AG04449 (cell line): ENCODE measurements at regions of chr9 and their contacts with region 1.

Region 1: DNA sequence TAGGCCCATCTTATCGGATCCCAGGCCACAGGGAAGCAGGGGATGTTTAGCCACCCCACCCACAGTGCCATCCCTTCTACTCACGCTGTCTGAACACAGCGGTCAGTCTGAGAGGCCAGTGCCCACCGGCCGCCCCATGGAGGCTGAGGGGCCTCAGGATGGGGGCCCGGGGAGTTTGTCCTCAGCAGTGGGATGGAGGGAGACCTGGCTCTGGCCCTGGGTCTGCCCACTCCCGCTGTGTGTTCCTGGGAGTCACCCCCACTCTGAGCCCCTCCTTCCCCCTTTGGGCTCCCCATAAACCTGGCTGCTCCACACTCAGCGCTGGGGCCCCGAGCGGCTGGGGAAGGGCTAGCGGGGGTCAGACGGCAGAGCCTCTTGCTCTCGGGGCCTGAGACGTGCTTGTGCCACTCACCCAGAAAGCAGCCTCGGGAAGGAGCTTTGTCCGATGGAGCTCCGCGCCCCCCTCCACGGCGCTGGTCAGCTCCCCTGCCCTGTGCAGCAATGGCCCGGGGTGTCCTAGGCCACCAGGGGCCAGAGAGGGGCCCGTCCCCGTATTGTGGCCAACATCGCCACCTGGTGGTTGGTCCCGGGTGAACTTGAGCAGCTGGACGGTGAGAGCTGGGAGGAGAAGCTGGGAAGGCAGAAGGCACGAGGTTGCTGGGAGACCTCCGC is 10.9 kb upstream of the LAMC3 start:
- DNase-seq: no peak
- H3K4me3 ChIP-seq: no peak overlapping the region
- CTCF ChIP-seq: peak; percentile 83

Region 2: DNA sequence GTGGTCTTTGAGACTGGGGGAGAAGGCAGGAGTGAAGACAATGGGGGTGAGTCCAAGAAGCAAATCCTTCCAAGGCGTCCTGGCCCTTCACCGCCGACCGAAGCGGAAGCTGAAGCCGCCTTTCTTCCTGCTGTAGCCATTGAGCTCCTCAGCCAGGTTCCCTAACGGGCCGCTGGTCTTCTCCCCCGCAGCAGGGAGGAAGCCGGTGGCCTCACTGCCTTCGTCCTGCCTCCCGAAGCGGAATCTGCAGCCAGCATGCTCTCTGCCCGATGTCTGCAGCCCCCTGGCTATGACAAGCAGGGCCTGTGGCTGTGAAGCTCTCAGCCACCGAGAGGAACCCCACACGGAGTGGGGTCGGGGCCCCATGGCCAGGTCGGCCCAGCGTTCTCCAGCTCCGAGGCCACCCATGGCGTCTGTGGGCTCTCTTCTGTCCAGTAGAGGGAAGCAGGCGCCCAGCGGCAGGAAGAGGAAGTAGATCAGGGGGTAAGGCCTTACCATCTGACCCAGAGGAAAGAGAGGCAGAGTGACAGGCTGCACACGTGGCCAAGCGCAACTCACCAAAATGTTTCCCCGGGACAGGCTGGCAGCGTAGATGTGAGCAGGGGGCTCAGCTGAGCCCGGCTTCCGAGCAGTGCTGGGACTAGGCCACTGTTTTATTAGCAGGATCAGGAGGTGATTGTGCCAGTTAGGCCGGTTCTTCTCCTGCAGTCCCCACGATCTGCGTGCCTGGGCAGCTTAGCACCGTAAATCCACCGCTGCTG is 104.5 kb before region 1 on chr9:
- CTCF ChIA-PET with region 1: interaction called, 16 read pairs
- POLR2A ChIA-PET with region 1: no interaction called
- DNase-seq: no peak
- H3K4me3 ChIP-seq: no peak overlapping the region
- CTCF ChIP-seq: peak; percentile 24

Region 3: GRCh38 chr9:130905125-130905901 is 92.7 kb before region 1 on chr9:
- CTCF ChIA-PET with region 1: interaction called, 11 read pairs
- POLR2A ChIA-PET with region 1: no interaction called
- DNase-seq: no peak
- H3K4me3 ChIP-seq: no peak overlapping the region
- CTCF ChIP-seq: no peak

Region 4: DNA sequence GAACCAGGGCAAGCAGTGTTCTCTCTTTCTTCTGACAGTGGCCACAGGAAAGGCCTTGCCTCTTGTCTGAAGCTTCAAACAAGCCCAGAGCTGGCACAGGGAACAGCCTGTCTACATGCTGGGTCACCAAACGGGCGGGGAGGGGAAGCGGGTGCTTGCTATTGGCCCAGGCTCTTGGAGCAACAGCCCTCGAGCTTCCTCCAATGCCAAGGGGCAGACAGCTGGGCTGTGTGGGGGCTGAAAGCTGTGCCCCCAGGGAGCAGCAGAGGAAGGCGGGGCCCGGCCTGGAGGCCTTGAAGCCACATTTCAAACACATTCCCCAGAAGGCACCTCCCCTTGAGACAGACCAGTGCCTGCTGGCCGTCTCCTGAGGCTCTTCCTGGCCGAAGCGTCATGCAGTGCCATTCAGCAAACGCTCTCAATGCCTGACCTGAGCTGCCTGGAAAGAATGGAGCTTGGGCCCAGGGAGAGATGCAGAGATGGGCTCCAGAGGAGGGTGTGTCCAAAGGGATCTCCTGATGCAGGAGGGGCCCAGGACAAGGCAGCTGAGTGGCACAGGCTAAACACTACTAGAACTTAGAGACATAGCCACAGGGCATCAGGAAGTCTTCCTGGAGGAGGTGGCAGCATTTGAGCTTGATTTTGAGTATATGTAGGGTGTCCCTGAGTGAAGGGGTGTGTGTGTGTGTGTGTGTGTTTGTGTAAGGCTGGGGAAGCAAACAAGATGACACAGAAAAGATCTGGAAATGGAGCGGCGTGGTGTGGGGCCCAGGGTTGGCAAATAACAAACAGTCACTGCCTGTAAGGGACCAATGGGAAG is 61.6 kb before region 1 on chr9:
- CTCF ChIA-PET with region 1: interaction called, 11 read pairs
- POLR2A ChIA-PET with region 1: no interaction called
- DNase-seq: peak; percentile 34
- H3K4me3 ChIP-seq: no peak overlapping the region
- CTCF ChIP-seq: no peak

Region 5: GRCh38 chr9:130986356-130986965 is 11.6 kb before region 1 on chr9:
- CTCF ChIA-PET with region 1: interaction called, 48 read pairs
- POLR2A ChIA-PET with region 1: no interaction called
- DNase-seq: no peak
- H3K4me3 ChIP-seq: no peak overlapping the region
- CTCF ChIP-seq: no peak

Region 6: GRCh38 chr9:131012396-131012917 is 14.4 kb after region 1 on chr9:
- CTCF ChIA-PET with region 1: interaction called, 17 read pairs
- POLR2A ChIA-PET with region 1: no interaction called
- DNase-seq: no peak
- H3K4me3 ChIP-seq: no peak overlapping the region
- CTCF ChIP-seq: no peak

Region 7: GRCh38 chr9:131018621-131019020 is 20.6 kb after region 1 on chr9:
- CTCF ChIA-PET with region 1: interaction called, 14 read pairs
- POLR2A ChIA-PET with region 1: no interaction called
- DNase-seq: no peak
- H3K4me3 ChIP-seq: no peak overlapping the region
- CTCF ChIP-seq: peak; percentile 8

Region 8: DNA sequence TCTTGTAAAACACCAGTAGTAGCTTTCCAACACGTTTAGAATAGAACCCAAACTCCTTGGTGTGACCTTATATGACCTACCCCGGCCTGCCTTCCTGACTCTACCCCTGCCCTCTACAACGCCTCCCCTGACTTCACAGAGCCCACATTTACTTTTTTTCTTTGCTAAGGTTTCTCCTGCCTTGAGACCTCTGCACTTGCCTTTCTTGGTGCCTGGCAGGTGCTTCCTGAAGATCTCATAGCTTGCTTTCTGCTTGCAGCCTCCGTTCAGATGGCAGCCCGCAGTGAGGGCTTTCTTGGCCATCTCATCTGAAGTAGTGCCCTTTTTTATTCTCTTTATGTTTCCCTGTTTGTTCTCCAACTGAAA is 151.6 kb after region 1 on chr9:
- CTCF ChIA-PET with region 1: no interaction called
- POLR2A ChIA-PET with region 1: no interaction called
- DNase-seq: no peak
- H3K4me3 ChIP-seq: no peak overlapping the region
- CTCF ChIP-seq: no peak

Region 9: DNA sequence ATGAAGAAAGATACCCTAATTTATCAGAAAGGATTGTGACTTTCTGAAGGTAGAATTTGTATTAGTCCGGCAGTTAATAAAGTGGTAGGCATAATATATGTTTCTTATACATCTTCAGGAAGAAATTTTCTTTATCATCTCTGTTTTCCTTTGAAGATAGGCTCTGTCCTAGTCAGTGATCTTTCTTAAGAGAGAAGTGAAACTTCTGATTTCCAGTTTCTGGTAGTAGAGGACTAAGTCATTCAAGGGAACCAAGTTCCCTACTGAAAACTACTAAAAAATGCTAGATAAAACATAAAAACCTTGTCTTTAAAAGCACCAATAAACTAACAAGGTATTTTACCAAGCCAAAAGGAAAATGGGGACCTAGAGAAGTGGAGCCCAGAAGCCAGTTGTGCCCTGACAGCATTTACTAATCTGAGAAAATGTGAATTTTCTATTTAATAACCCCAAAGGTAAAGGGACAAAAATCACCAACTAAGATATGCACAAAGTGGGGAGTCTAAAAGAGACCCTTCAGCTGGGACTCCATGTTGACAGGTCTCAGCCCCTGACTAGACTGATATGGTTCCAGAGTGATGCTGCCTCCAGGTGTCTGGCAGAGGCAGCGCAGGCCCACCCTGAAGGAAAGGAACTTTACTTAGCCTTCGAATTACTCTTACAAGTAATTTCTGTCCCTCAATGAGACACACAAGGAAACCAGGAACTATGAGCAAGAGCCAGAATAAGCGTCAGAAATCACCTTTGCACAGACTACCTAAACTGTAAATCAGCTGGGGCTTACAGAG is 205.6 kb after region 1 on chr9:
- CTCF ChIA-PET with region 1: no interaction called
- POLR2A ChIA-PET with region 1: no interaction called
- DNase-seq: no peak
- H3K4me3 ChIP-seq: no peak overlapping the region
- CTCF ChIP-seq: peak; percentile 15